ENCODE measurements at regions of chr15 and their contacts with region 1.

Region 1: DNA sequence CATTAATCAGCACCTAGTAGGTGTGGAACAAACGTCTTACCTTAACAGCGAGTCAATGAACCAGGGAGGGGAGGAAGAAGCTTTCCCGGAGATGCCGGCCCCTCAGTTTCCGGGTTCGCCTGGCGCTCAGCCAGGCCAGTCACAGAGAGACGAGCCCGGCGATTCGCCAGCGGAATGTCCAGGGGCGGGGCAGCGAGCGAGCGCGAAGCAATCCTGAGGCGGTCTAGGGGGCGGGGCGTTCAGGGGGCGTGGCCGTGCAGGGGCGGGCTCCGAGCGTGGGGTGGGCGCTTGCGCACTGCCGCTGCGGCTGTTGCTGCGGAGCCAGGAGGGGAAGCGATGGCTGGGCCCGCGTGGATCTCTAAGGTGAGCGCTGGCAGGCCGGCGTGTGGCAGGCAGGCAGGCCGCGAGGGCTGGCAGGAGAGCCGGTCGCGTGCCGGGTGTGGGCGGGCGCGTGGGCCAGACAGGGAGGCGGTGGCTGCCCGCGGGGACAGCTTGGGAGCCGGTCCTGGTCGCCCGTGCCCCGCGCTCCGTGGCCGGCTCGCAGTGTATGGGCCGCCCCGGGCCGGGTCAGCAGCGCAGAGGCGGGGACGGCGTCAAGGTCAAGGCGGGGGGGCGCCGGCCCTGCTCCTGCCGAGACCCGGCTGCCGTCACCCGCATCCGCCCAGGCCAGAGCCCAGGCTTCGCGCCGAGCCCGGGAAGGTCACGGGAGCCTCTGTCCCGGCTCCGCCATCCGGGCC is at the start of gene IDH3A:
- DNase-seq: peak; percentile 99
- H3K4me3 Mint-ChIP-seq: peak within 1 kb of the TSS; percentile 86
- H3K27ac Mint-ChIP-seq: peak within 1 kb of the TSS; percentile 79
- H3K4me1 Mint-ChIP-seq: peaks cover 41% of the 10 kb centered on the region
- H3K27me3 Mint-ChIP-seq: no peaks in the 10 kb centered on the region
- total RNA-seq, gene IDH3A: 73.5 to 85.0 TPM

Region 2: DNA sequence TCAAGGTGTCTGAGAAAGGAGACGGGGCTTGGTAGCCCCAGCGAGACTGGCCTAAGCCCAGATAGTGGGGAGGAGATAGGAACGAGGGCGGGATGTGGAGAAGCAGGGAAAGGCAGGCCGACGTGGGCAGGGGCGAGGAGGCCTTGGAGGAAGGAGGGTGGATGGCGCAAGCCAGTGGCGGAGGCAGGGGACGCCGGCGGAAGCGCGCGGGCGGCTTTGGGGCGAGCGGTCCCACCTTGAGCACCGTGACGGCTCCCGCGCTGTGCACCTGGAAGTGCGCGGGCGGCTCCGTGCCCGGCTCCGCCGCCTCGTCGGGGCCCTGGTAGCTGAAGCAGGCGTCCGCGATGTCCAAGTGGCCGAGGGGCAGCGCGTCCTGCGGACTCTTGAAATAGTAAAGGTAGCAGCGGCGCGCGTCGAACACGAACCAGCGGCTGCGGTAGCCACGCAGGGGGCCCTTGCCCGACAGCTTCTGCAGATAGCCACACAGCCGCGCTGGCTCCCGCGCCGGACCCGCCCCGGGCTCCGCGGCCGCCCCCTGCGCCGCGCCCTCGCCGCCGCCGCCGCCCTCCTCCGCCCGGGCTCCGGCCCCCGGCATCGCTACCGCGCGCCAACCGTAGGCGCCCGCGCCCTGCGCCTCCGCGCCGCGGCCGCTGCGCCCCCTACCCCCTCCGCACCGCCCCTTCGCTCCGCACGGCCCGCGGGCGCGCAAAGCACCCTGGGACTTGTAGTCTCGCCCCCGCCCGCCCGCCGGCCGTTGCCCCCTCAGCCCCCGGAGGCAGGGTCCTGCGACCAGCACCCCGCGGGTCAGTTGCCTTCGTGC is 72.0 kb before region 1 on chr15 and contains the start of gene TBC1D2B:
- CTCF ChIA-PET with region 1: no interaction called
- POLR2A ChIA-PET with region 1: no interaction called
- DNase-seq: peak; percentile 74
- H3K4me3 Mint-ChIP-seq: peak within 1 kb of the TSS; percentile 100
- H3K27ac Mint-ChIP-seq: peak within 1 kb of the TSS; percentile 89
- H3K4me1 Mint-ChIP-seq: peaks cover 48% of the 10 kb centered on the region
- H3K27me3 Mint-ChIP-seq: no peaks in the 10 kb centered on the region
- total RNA-seq, gene TBC1D2B: 97.1 to 101 TPM

Region 3: GRCh38 chr15:78131295-78132061 is 17.8 kb before region 1 on chr15 and contains the start of gene CIB2:
- CTCF ChIA-PET with region 1: interaction called, 13 read pairs
- POLR2A ChIA-PET with region 1: interaction called, 32 read pairs
- DNase-seq: peak; percentile 81
- H3K4me3 Mint-ChIP-seq: peak within 1 kb of the TSS; percentile 79
- H3K27ac Mint-ChIP-seq: no peak within 1 kb of the TSS
- H3K4me1 Mint-ChIP-seq: peaks cover 23% of the 10 kb centered on the region
- H3K27me3 Mint-ChIP-seq: peaks cover 2% of the 10 kb centered on the region
- total RNA-seq, gene CIB2: 0.91 to 1.1 TPM

Region 4: DNA sequence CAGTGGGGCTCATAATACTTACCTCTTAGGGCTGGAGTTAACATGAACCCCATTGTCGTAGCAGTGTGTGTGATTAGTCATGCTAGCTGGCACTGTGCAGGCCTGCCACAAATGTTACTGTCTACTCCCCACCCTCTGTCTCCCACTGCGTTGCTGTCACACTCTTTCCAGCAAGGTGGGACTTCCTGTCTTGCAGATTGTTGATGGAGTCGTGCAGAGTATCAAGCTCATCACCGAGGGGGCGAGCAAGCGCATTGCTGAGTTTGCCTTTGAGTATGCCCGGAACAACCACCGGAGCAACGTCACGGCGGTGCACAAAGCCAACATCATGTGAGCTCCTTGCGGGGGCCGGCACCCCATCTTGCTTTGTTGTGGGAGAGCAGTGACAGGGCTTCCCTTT is 12.8 kb after region 1 on chr15:
- CTCF ChIA-PET with region 1: no interaction called
- POLR2A ChIA-PET with region 1: interaction called, 29 read pairs
- DNase-seq: peak; percentile 46
- H3K4me3 Mint-ChIP-seq: no peak overlapping the region
- H3K27ac Mint-ChIP-seq: peak overlapping the region; percentile 58
- H3K4me1 Mint-ChIP-seq: peaks cover 18% of the 10 kb centered on the region
- H3K27me3 Mint-ChIP-seq: no peaks in the 10 kb centered on the region

Region 5: GRCh38 chr15:78170848-78171773 is 21.9 kb after region 1 on chr15:
- CTCF ChIA-PET with region 1: no interaction called
- POLR2A ChIA-PET with region 1: interaction called, 29 read pairs
- DNase-seq: no peak
- H3K4me3 Mint-ChIP-seq: no peak overlapping the region
- H3K27ac Mint-ChIP-seq: peak overlapping the region; percentile 32
- H3K4me1 Mint-ChIP-seq: peaks cover 58% of the 10 kb centered on the region
- H3K27me3 Mint-ChIP-seq: no peaks in the 10 kb centered on the region

Region 6: DNA sequence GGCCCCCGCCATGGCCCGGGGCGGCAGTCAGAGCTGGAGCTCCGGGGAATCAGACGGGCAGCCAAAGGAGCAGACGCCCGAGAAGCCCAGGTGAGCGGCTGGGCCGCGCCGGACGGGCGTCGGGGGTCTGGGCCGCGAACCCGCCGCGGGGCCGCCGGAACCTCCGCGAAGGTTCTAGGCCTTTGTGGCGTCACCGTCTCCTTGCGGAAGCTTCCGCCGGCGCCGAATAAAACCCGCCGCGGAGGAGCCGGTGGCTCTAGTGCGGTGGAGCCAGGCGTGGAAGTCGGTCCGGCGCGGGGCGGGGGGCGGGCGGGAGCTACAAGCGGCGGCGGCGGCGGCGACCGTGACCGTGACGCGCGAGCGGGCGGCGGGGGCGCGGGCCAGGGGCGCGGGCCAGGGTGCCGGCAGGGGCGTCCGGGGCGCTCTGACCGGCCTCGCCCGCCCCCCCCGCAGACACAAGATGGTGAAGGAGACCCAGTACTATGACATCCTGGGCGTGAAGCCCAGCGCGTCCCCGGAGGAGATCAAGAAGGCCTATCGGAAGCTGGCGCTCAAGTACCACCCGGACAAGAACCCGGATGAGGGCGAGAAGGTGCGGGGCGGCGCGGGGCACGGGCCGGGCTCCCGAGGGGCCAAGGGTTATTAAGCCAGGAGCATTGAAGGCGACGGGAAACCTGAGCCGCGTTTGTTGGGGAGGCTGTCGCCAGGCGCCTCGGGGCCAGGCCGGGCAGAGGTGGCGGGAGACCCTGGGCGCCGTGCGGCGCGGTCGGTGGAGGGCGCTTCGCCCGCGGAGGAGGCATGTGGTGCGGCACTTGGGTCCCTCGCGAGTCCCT is 115.3 kb after region 1 on chr15 and contains the start of gene DNAJA4:
- CTCF ChIA-PET with region 1: no interaction called
- POLR2A ChIA-PET with region 1: interaction called, 19 read pairs
- DNase-seq: peak; percentile 68
- H3K4me3 Mint-ChIP-seq: peak within 1 kb of the TSS; percentile 83
- H3K27ac Mint-ChIP-seq: peak within 1 kb of the TSS; percentile 71
- H3K4me1 Mint-ChIP-seq: peaks cover 29% of the 10 kb centered on the region
- H3K27me3 Mint-ChIP-seq: no peaks in the 10 kb centered on the region
- total RNA-seq, gene DNAJA4: 27.7 to 30.9 TPM

Region 7: GRCh38 chr15:78315686-78316282 is 166.5 kb after region 1 on chr15:
- CTCF ChIA-PET with region 1: no interaction called
- POLR2A ChIA-PET with region 1: no interaction called
- DNase-seq: no peak
- H3K4me3 Mint-ChIP-seq: no peak overlapping the region
- H3K27ac Mint-ChIP-seq: no peak overlapping the region
- H3K4me1 Mint-ChIP-seq: no peaks in the 10 kb centered on the region
- H3K27me3 Mint-ChIP-seq: no peaks in the 10 kb centered on the region

Measured in activated CD4-positive, alpha-beta memory T cell treated with anti-CD3 and anti-CD28 coated beads, Interleukin-2, amount 10 ng/mL, durations not matched to agents 7 days and 5 days (primary cell).